Activated CD4-positive, alpha-beta memory T cell treated with anti-CD3 and anti-CD28 coated beads, Interleukin-2, amount 10 ng/mL, durations not matched to agents 7 days and 5 days (primary cell): ENCODE measurements at regions of chr20 and their contacts with region 1.

Region 1: DNA sequence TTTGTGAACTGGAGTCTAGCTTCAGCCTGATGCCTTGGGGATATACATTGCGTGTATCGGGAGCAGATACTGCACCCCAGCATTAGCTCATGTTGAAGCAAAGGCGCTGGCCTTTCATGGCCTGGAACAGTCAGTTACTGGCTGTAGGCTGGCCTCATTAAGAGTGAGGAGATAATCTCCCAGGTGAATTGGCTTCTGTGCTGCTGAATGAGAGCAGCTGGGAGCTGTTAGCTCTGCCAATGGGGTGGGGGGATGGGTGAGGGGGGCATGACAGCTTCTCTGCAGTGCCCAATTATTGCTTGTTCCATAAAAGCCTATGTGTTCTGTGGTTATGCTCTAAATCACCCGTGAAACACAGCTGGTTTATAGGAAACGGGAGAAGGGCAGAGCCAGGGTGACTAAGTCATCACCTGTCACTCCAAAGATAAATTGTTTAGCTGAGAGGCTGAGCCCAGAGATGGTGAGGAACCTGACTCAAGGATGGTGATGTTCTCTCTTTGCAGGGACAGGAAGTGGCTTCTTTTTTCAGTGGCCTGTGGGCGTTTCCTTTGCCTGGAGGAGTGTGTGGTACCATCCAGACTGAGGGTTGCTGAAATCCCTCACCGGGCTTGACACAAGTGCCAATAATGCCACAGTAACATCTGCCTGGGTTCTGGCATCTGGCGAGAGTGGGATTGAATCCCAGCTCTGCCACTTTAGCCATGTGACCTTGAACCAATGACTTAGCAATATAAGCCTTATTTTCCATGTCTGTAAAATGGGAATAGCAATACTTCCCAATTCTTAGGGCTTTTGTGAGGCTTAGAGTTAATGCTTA is 170.8 kb downstream of the BCAS1 start:
- DNase-seq: peak; percentile 87
- H3K4me3 Mint-ChIP-seq: no peak overlapping the region
- H3K27ac Mint-ChIP-seq: peak overlapping the region; percentile 78
- H3K4me1 Mint-ChIP-seq: peaks cover 54% of the 10 kb centered on the region
- H3K27me3 Mint-ChIP-seq: no peaks in the 10 kb centered on the region

Region 2: DNA sequence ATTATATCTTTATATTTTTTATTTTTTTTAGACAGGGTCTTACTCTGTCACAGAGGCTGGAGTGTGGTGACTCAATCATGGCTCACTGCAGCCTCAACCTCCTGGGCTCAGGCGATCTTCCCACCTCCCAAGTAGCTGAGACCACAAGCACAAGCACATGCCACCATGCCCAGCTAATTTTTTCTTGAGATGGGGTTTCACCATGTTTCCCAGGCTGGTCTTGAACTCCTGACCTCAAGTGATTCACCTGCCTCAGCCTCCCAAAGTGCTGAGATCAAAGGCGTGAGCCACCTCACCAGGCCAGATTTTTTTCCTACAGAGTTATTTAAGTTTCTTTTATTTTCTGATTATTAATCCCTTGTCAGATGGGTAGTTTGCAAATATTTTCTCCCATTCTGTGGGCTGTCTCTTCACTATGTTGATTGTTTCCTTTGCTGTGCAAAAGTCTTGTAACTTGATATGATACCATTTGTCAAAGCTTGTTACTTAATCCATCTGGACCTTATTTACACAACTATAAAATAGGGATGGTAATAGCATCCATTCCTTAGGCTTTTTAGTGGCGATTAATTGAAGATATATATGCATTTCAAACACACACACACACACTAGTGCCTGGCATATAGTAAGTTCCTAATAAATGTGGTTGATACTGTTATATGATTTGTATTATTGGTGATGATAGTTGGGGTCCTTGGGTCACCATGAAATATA is 16.3 kb before region 1 on chr20:
- CTCF ChIA-PET with region 1: interaction called, 10 read pairs
- POLR2A ChIA-PET with region 1: interaction called, 16 read pairs
- DNase-seq: no peak
- H3K4me3 Mint-ChIP-seq: no peak overlapping the region
- H3K27ac Mint-ChIP-seq: no peak overlapping the region
- H3K4me1 Mint-ChIP-seq: peaks cover 43% of the 10 kb centered on the region
- H3K27me3 Mint-ChIP-seq: no peaks in the 10 kb centered on the region